Activated naive CD4-positive, alpha-beta T cell treated with anti-CD3 and anti-CD28 coated beads, Interleukin-2, amount 10 ng/mL, durations not matched to agents 7 days and 5 days (primary cell): ENCODE measurements at regions of chr10 and their contacts with region 1.

Region 1: DNA sequence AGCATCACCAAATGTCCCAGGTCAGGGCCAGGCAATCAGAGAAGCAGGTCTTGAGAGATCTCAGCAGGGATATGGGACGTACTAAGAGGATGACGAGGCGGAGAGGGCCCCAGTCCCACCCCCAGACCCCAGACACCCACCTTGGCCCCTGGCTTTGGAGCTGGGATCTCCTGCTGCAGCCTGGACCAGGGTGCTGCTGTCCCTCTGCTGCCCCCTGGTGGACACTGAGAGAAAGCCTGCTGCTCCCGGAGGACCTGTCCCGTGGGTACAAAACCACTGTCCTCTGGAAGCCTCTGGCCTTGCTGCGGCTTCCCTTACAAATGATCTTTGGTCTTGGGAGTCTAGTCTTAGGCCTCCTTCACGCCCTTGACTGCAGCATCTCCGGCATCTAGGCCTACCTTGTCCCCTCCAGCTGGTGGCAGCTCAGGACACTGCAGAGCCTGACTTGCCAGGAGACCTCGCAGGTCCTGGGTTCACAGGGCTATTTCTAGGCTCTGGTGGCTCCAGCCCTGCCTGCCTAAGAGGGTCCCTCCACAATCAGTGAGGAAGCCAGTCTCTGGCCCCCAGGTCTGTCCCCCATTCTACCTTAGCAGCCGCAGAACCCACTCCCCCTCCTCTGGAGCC is 97.1 kb downstream of the RGS10 start:
- DNase-seq: peak; percentile 89
- H3K4me3 Mint-ChIP-seq: no peak overlapping the region
- H3K27ac Mint-ChIP-seq: peak overlapping the region; percentile 43
- H3K4me1 Mint-ChIP-seq: peaks cover 14% of the 10 kb centered on the region
- H3K27me3 Mint-ChIP-seq: no peaks in the 10 kb centered on the region

Region 2: GRCh38 chr10:119207367-119207668 is 238.1 kb before region 1 on chr10 and contains the start of gene GRK5:
- CTCF ChIA-PET with region 1: interaction called, 95 read pairs
- DNase-seq: peak; percentile 96
- H3K4me3 Mint-ChIP-seq: peak within 1 kb of the TSS; percentile 93
- H3K27ac Mint-ChIP-seq: peak within 1 kb of the TSS; percentile 99
- H3K4me1 Mint-ChIP-seq: peaks cover 49% of the 10 kb centered on the region
- H3K27me3 Mint-ChIP-seq: peaks cover 4% of the 10 kb centered on the region

Region 3: GRCh38 chr10:119428789-119429188 is 16.6 kb before region 1 on chr10:
- CTCF ChIA-PET with region 1: interaction called, 10 read pairs
- DNase-seq: no peak
- H3K4me3 Mint-ChIP-seq: no peak overlapping the region
- H3K27ac Mint-ChIP-seq: peak overlapping the region; percentile 24
- H3K4me1 Mint-ChIP-seq: peaks cover 16% of the 10 kb centered on the region
- H3K27me3 Mint-ChIP-seq: no peaks in the 10 kb centered on the region

Region 4: GRCh38 chr10:119478111-119478802 is 32.8 kb after region 1 on chr10:
- CTCF ChIA-PET with region 1: interaction called, 13 read pairs
- DNase-seq: peak; percentile 46
- H3K4me3 Mint-ChIP-seq: peak overlapping the region; percentile 21
- H3K27ac Mint-ChIP-seq: peak overlapping the region; percentile 83
- H3K4me1 Mint-ChIP-seq: peaks cover 36% of the 10 kb centered on the region
- H3K27me3 Mint-ChIP-seq: peaks cover 36% of the 10 kb centered on the region

Region 5: DNA sequence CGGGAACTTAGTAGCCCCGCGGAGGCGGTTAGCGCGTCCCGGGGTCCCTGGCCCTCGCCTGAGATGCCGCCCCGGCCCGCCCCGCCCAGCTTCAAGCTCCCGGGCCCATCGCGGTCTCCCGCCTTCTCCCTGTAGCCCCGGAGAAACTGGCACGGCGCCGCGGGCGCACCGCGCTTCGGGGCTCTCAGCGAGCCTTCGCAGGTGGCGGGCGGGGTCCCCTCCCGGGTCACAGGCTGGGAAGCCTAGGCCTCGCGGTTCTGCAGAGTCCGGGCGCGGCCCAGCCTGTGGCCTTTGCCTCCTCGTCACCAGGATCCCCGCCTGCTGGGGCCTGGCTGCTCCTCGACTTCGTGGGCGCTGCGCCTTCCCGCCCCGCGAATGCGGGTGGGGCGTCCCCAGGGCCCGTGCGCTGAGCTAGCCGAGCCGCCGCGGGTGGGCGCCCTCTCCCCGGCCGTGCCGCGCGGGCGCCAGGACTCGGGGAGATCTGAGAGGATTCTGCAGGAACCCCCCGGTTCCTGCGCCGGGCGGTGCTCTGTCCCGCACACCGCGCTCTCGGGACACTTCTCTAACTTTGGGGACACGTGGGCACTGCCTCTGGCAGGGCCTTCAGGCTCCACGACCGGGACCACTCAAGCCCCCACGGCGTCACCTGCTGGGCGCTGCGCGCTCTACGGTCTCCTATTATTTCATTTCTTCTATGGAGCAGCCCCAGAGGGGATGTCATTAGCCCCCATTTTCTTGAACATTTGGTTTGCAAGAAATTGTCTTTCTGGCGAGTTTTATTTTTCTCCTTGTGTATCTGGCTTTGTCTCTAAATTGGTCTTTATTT is 97.8 kb after region 1 on chr10:
- CTCF ChIA-PET with region 1: interaction called, 19 read pairs
- DNase-seq: peak; percentile 77
- H3K4me3 Mint-ChIP-seq: peak overlapping the region; percentile 91
- H3K27ac Mint-ChIP-seq: peak overlapping the region; percentile 94
- H3K4me1 Mint-ChIP-seq: peaks cover 42% of the 10 kb centered on the region
- H3K27me3 Mint-ChIP-seq: peaks cover 26% of the 10 kb centered on the region